HEK293 (cell line): ENCODE measurements at regions of chr1 and their contacts with region 1.

Region 1: DNA sequence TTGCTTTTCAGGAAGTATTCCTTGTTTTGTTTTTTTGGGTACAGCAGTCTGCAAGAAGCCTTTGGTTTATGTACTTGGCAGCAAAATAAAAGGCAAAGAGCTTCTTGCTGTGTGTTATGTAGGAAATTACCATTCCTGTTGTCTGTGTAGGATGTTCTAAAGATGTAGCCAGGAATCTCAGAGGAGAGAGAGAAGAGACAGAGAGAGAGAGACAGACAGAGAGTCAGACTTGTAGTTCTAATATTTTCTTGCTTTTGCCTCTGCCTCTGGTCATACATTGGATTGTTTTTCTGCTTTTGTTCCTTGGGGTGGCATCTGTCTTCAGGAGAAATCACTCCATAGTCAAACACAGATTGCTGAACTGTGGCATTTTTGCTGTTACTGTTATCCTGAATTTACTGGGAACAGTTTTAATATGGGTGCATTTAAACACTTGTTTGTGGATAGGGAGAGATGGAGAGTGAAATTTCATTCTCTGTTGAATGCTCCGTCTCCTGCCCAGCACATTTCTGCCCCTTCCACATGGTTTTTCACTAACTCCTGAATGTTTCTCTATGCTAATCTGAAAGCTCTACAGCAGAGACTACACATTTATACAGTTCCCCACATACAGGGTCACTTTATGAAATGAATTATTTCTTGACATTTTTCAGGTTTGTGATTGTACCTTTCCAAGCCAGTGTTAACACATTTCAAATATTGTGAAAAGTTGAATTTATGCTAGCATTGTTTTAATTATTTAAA is 49.8 kb downstream of the POU2F1 start:
- H3K4me3 ChIP-seq: no peak overlapping the region
- H3K27ac ChIP-seq: no peak overlapping the region
- H3K4me1 ChIP-seq: peaks cover 16% of the 10 kb centered on the region
- CTCF ChIP-seq: no peak

Region 2: DNA sequence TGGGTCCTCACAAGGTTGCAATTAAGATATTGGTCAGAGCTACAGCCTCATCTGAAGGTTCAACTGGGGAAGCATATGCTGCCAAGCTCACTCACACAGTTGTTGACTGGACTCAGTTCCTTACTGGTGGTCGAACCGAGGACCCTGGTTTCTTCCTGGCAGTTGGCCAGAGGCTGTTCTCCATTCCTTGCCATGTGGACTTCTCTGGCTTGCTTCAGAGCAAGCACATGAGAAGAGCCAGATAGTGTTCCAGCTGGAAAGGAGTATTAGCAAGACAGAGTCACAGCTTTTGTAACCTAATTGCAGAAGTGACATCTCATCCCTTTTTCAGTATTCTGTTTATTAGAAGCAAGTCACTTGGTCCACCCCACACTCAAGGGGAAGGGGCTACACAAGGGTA is 26.3 kb before region 1 on chr1:
- CTCF ChIA-PET with region 1: interaction called, 13 read pairs
- POLR2A ChIA-PET with region 1: no interaction called
- H3K4me3 ChIP-seq: no peak overlapping the region
- H3K27ac ChIP-seq: no peak overlapping the region
- H3K4me1 ChIP-seq: peaks cover 7% of the 10 kb centered on the region
- CTCF ChIP-seq: no peak

Region 3: GRCh38 chr1:167258858-167259257 is 11.7 kb before region 1 on chr1:
- CTCF ChIA-PET with region 1: interaction called, 20 read pairs
- POLR2A ChIA-PET with region 1: no interaction called
- H3K4me3 ChIP-seq: no peak overlapping the region
- H3K27ac ChIP-seq: no peak overlapping the region
- H3K4me1 ChIP-seq: peaks cover 18% of the 10 kb centered on the region
- CTCF ChIP-seq: no peak

Region 4: GRCh38 chr1:167401260-167401873 is 130.8 kb after region 1 on chr1:
- CTCF ChIA-PET with region 1: interaction called, 17 read pairs
- POLR2A ChIA-PET with region 1: no interaction called
- H3K4me3 ChIP-seq: no peak overlapping the region
- H3K27ac ChIP-seq: no peak overlapping the region
- H3K4me1 ChIP-seq: no peaks in the 10 kb centered on the region
- CTCF ChIP-seq: peak; percentile 60; the same call in 1 of the 2 replicates

Region 5: DNA sequence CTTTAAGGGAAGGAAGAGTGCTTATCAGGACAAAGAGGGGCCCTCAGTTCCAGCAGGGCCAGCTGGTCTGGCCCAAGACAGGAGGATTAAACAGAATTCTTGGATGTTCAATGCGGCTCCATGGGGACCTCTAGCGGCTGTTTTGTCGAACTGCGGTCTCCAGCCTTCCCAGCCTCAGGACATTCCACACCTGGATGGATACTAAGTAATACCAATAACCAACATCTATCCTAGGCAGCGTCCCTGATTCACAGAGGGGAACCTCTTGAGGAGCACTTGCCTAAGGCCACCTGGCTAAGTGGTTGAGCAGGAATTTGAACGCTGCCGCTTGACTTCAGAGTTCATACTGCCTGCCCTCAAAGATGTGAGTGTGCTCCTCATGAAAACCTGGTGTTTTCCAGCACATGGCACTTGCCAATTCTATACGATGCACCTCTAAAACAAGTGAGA is 263.4 kb after region 1 on chr1:
- CTCF ChIA-PET with region 1: interaction called, 26 read pairs
- POLR2A ChIA-PET with region 1: no interaction called
- H3K4me3 ChIP-seq: no peak overlapping the region
- H3K27ac ChIP-seq: no peak overlapping the region
- H3K4me1 ChIP-seq: no peaks in the 10 kb centered on the region
- CTCF ChIP-seq: peak; percentile 75

Region 6: GRCh38 chr1:167819849-167820683 is 549.5 kb after region 1 on chr1:
- CTCF ChIA-PET with region 1: no interaction called
- POLR2A ChIA-PET with region 1: no interaction called
- H3K4me3 ChIP-seq: 0 out of 2 replicates have a peak overlapping the region, but pooled peaks have one; percentile 15
- H3K27ac ChIP-seq: no peak overlapping the region; the same call in 1 of the 2 replicates
- H3K4me1 ChIP-seq: no peaks in the 10 kb centered on the region
- CTCF ChIP-seq: no peak